ENCODE measurements at regions of chr3 and their contacts with region 1.

Region 1: GRCh38 chr3:185942907-185943759 is 5.3 kb upstream of the TRA2B start:
- DNase-seq: peak; percentile 92
- ATAC-seq: peak; percentile 96
- H3K4me3 Mint-ChIP-seq: no peak overlapping the region
- H3K27ac Mint-ChIP-seq: no peak overlapping the region
- H3K4me1 Mint-ChIP-seq: peaks cover 22% of the 10 kb centered on the region
- H3K27me3 Mint-ChIP-seq: peaks cover 4% of the 10 kb centered on the region

Region 2: DNA sequence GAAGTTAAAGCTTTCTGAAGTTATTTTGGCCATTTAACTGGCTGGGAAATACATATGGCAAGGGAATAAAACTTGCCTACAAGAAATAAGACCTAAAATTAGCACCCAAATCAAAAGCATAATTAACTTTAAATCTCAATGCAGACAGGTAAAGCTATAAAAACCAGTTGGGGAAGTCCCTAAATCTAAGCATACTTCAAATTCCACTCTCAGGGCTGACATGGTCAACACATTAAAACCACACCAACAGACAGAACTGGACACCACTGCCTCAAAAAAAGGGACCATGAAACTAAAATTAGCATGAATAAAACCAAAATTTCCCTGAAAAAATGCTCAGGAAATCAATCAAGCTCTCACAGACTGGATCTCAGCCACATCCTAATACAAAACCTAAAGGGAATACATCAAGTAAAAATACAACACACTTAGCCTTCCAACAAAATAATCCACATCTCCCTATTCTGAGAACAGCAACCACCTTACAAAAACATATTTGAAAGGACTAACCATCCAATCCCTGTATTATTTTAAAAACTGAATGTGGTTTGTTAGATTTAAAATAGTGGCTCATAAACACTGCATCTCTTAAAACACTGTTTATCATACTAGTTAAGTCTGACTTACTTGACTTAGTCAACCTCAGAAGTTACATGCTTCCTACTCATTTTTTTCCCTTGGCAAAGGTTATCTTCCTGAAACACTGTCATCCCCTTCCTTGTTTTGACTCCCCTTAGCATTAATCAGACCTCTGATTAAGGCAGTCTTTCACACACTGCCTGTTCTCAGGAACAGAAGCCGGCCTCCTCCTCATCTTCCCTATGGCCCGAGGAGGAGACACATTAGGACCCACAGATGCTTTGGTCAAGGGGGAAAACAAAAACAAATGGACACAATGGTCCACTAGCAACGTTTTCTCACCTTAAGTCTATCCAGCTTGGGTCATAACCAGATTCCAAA is 13.7 kb before region 1 on chr3:
- CTCF ChIA-PET with region 1: interaction called, 39 read pairs
- POLR2A ChIA-PET with region 1: interaction called, 36 read pairs
- intact Hi-C with region 1: no loop called
- DNase-seq: no peak
- ATAC-seq: peak; percentile 20
- H3K4me3 Mint-ChIP-seq: peak overlapping the region; percentile 97
- H3K27ac Mint-ChIP-seq: peak overlapping the region; percentile 84
- H3K4me1 Mint-ChIP-seq: peaks cover 92% of the 10 kb centered on the region
- H3K27me3 Mint-ChIP-seq: no peaks in the 10 kb centered on the region

Region 3: DNA sequence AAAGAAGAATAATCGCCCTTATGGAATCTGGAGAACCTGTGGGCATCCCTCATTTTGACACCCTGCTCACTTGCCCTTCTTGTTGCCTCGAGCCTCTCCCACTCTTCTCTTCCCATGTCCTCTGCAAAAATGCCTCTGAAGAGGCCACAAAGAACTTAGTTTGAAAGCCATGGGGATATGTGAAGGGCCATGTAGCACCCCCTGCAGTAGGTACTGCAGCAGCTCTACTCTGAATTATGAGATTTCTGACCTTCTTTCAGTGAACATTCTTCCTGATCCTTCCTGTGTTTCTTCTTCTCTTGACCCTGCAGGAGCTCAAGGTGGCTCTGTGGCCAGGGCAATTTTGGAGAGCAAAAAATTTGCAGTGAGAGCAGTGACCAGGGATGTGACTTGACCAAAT is 25.0 kb after region 1 on chr3:
- CTCF ChIA-PET with region 1: interaction called, 129 read pairs
- POLR2A ChIA-PET with region 1: no interaction called
- intact Hi-C with region 1: no loop called
- DNase-seq: no peak
- ATAC-seq: no peak
- H3K4me3 Mint-ChIP-seq: no peak overlapping the region
- H3K27ac Mint-ChIP-seq: no peak overlapping the region
- H3K4me1 Mint-ChIP-seq: no peaks in the 10 kb centered on the region
- H3K27me3 Mint-ChIP-seq: no peaks in the 10 kb centered on the region

Region 4: DNA sequence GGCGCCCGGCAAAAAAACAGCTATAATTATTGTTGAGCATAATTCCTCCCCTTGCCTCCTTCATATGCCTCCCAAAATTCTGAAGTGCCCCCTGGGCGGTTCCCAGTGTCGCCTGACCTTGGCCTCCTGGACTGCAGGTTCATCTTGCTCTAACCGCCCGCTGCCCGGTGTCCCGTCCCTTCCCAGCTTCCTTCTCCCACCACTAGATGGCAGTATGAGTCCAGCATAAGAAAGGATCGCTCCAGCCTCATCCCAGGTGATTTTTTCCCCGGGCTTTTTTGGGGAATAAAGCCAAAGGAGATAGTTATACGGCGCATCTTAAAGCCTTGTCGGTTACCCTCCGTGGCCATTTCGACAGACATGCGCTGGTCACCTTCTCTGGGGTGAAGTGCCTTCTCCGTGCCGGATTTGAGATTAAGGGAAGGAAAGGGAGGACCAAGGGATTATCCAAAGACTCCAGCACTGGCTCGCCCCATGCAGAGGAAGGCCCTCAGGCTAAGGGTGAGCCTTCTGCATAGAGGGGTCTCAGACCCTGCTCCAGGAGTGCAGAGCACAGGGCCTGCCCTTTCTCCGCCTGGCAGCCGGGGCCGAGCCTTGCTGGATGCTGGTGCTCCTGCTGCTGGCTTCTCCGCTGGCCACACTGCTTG is 40.5 kb after region 1 on chr3:
- CTCF ChIA-PET with region 1: interaction called, 40 read pairs
- POLR2A ChIA-PET with region 1: no interaction called
- intact Hi-C with region 1: no loop called
- DNase-seq: peak; percentile 71
- ATAC-seq: peak; percentile 83
- H3K4me3 Mint-ChIP-seq: no peak overlapping the region
- H3K27ac Mint-ChIP-seq: no peak overlapping the region
- H3K4me1 Mint-ChIP-seq: peaks cover 4% of the 10 kb centered on the region
- H3K27me3 Mint-ChIP-seq: peaks cover 7% of the 10 kb centered on the region

Measured in activated CD4-positive, alpha-beta T cell treated with anti-CD3 and anti-CD28 coated beads for 36 hours (primary cell).